GM12878 (cell line): ENCODE measurements at regions of chr10 and their contacts with region 1.

Region 1: DNA sequence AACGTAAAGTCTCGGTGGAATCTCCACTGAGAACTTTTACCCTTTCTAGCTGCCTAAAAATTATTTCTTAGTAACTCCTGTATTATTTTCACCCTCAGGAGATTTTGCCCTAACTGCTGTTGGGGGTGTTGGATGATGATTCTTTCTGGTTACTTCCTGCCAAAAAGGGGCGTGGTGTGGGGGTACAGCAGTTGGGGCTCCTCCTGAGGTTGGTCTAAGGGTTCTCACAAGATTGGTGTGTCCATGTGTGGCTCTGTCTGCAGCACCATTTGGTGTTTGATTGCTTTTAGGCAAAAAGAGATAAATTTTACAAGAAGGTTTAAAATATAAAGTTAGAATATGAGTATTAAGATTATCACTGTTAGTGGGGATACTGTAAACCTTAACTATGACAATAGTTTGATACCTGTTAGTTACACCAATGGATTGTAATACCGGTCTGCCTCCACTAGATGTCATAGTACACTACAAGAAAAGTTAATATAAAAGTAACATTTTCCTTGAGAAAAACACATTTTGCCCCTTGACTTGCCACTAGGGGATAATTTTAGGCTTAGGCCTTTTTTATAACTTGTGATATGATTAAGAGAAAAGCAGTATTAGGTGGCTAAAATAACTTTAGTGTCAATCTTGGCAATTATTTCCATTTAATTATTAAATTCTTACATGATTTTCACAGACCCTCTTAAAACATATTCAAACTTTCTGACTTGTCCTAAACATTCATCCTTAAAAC is 928.7 kb downstream of the IPMK start:
- DNase-seq: peak; percentile 7
- ATAC-seq: peak; percentile 67
- H3K4me3 ChIP-seq: no peak overlapping the region
- H3K27ac ChIP-seq: no peak overlapping the region
- H3K4me1 ChIP-seq: no peaks in the 10 kb centered on the region
- H3K27me3 ChIP-seq: no peaks in the 10 kb centered on the region
- CTCF ChIP-seq: peak; percentile 50 to 60 (median 50); a peak in 5 of 6 replicates
- EP300 ChIP-seq: no peak
- POLR2A ChIP-seq: no peak
- RAD21 ChIP-seq: peak; percentile 46

Region 2: DNA sequence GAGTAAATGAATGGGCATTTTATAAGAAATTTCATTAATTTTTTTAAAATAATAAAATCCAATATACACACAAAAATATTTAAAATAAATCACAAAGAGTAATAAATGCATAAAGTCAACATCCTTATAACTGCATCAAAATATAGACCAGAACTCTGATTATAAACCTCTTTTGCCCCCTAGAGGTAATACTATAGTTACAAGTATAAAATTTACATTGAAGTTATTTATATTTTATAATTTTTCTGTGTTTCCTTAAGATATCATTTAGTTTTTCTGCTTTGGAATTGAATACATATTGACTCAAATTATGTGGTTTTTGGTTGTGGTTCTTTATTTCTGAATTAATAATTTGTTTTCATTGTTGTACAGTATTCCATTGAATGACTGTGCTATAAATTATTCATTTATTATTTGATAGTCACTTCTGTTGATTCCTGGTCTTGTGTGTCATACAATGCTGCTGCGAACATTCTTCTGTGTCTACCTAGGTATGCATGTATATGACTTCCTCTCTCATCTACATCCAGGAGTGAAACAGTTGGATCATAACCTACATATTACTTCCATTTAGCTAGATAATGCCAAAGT is 255.1 kb after region 1 on chr10:
- CTCF ChIA-PET with region 1: no interaction called
- POLR2A ChIA-PET with region 1: no interaction called
- RAD21 ChIA-PET with region 1: no interaction called
- SMC1A ChIA-PET with region 1: no interaction called
- in situ Hi-C with region 1: no loop called
- intact Hi-C with region 1: loop called (anchors 5 kb)
- DNase-seq: no peak
- ATAC-seq: no peak
- H3K4me3 ChIP-seq: no peak overlapping the region
- H3K27ac ChIP-seq: no peak overlapping the region
- H3K4me1 ChIP-seq: no peaks in the 10 kb centered on the region
- H3K27me3 ChIP-seq: no peaks in the 10 kb centered on the region
- CTCF ChIP-seq: no peak; a peak in 1 of 6 replicates
- EP300 ChIP-seq: no peak
- POLR2A ChIP-seq: no peak
- RAD21 ChIP-seq: no peak

Region 3: GRCh38 chr10:57657164-57657765 is 318.3 kb after region 1 on chr10:
- CTCF ChIA-PET with region 1: interaction called, 109 read pairs
- POLR2A ChIA-PET with region 1: no interaction called
- RAD21 ChIA-PET with region 1: interaction called, 5 read pairs
- SMC1A ChIA-PET with region 1: interaction called, 7 read pairs
- in situ Hi-C with region 1: loop called (anchors 5 kb)
- intact Hi-C with region 1: loop called (anchors 1 kb)
- DNase-seq: no peak
- ATAC-seq: peak; percentile 97
- H3K4me3 ChIP-seq: no peak overlapping the region
- H3K27ac ChIP-seq: no peak overlapping the region
- H3K4me1 ChIP-seq: no peaks in the 10 kb centered on the region
- H3K27me3 ChIP-seq: no peaks in the 10 kb centered on the region
- CTCF ChIP-seq: peak; percentile 73 to 79 (median 78)
- EP300 ChIP-seq: no peak
- POLR2A ChIP-seq: no peak
- RAD21 ChIP-seq: peak; percentile 86

Region 4: GRCh38 chr10:57849691-57850357 is 510.8 kb after region 1 on chr10:
- CTCF ChIA-PET with region 1: no interaction called
- POLR2A ChIA-PET with region 1: no interaction called
- RAD21 ChIA-PET with region 1: no interaction called
- SMC1A ChIA-PET with region 1: no interaction called
- in situ Hi-C with region 1: no loop called
- intact Hi-C with region 1: loop called (anchors 10 kb)
- DNase-seq: no peak
- ATAC-seq: no peak
- H3K4me3 ChIP-seq: no peak overlapping the region
- H3K27ac ChIP-seq: no peak overlapping the region
- H3K4me1 ChIP-seq: no peaks in the 10 kb centered on the region
- H3K27me3 ChIP-seq: no peaks in the 10 kb centered on the region
- CTCF ChIP-seq: peak in 2 of 3 experiments; percentile 18 to 32; a peak in 1 of 6 replicates
- EP300 ChIP-seq: no peak
- POLR2A ChIP-seq: no peak
- RAD21 ChIP-seq: no peak

Region 5: DNA sequence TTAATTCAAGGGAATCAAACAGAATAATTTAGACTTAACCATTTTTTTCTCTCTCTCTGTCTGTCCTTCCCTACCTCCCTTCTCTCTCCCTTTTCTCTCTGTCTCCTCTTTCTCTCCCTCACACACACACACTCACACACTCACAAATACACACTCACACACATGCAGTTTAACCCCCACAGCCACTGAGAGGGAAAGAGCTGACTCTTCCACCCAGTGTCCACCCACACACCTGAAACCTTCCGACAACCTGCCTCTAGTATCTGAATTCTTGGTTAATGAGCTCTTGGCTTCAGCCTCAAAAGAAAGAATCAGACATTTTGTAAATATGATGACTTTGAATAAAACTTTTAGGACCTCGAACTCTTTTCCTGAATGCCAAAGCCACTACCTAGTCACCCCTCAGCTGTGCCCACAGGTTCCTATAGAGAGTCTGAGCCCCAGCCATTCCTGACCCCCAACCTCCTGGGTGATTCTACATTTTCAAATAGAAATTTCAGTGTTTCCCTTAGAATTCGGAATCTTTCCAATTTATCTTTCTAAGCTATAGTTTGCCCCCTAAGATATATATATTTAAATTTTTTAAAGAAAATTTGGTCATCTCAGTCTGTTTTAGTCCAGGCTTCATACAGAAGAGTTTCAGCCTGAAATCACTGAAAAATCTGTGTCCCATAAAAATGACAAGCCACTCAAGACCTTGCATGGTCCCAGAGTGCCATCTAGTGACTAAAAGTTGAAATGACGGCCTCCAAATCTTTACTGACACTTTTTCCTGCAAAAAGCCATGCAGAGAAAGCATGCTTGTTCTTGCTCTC is 725.9 kb after region 1 on chr10:
- CTCF ChIA-PET with region 1: no interaction called
- POLR2A ChIA-PET with region 1: no interaction called
- RAD21 ChIA-PET with region 1: no interaction called
- SMC1A ChIA-PET with region 1: no interaction called
- in situ Hi-C with region 1: no loop called
- intact Hi-C with region 1: loop called (anchors 1 kb)
- DNase-seq: no peak
- ATAC-seq: peak; percentile 38
- H3K4me3 ChIP-seq: no peak overlapping the region
- H3K27ac ChIP-seq: no peak overlapping the region
- H3K4me1 ChIP-seq: no peaks in the 10 kb centered on the region
- H3K27me3 ChIP-seq: no peaks in the 10 kb centered on the region; a peak in 1 of 4 replicates
- CTCF ChIP-seq: peak; percentile 54 to 61 (median 58)
- EP300 ChIP-seq: no peak
- POLR2A ChIP-seq: no peak
- RAD21 ChIP-seq: peak; percentile 83

Region 6: GRCh38 chr10:58152673-58153263 is 813.8 kb after region 1 on chr10:
- CTCF ChIA-PET with region 1: interaction called, 4 read pairs
- POLR2A ChIA-PET with region 1: no interaction called
- RAD21 ChIA-PET with region 1: interaction called, 7 read pairs
- SMC1A ChIA-PET with region 1: no interaction called
- in situ Hi-C with region 1: no loop called
- intact Hi-C with region 1: loop called (anchors 5 kb)
- DNase-seq: no peak
- ATAC-seq: peak; percentile 70
- H3K4me3 ChIP-seq: no peak overlapping the region
- H3K27ac ChIP-seq: no peak overlapping the region
- H3K4me1 ChIP-seq: no peaks in the 10 kb centered on the region
- H3K27me3 ChIP-seq: no peaks in the 10 kb centered on the region
- CTCF ChIP-seq: peak; percentile 47 to 64 (median 57); a peak in 5 of 6 replicates
- EP300 ChIP-seq: no peak
- POLR2A ChIP-seq: no peak
- RAD21 ChIP-seq: peak; percentile 58